CD4-positive, alpha-beta memory T cell (primary cell): ENCODE measurements at regions of chr9 and their contacts with region 1.

Region 1: DNA sequence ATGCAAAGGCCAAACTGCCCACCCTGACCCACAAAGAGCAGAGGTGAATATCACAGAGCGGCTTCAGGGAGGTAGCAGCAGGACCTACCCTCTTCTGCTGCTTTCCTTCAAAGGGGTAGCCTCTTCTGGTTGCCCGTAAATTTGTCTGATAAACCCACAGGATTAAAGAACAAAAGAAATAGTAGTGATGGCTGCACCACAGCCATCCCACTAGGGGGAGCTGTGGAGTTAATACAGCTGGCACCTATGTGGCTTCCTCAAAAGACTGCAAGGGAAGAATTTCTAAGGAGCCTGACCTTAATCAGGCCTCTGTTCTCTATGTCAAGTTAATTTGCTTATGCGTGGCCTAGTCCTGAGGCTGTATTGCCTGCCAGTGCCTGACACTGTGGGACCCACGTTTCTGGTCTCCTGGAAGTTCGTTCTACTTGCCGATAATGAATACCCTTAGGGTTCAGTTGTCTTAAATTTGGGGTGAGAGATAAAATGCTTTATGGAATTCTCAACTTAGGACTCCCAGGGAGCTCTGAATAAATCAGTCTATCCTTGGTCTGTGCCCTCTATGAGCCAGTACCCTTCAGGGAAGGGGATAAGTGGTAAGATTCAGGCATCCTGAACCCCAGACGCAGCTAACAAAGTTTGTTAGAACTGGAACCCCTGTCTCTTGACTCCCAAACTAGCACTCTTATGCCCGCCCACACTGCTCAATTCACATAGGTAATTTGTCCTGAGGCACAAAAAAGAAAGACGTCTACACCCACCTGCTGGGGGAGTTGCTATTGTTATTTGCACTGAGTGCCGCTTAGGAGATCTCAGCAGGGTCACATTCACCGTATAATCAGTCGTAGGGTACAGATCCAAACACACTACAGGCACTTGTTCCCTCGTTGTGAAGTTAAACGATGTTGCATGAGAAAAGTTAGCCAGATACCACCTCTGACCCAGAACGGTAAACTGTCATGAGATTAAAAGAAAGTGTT is 77.1 kb downstream of the SUSD1 start:
- DNase-seq: peak; percentile 64 to 73 (median 71)
- H3K4me3 ChIP-seq: no peak overlapping the region
- H3K4me3 Mint-ChIP-seq: no peak overlapping the region
- H3K27ac ChIP-seq: no peak overlapping the region
- H3K27ac Mint-ChIP-seq: no peak overlapping the region
- H3K4me1 ChIP-seq: peaks cover 21% of the 10 kb centered on the region
- H3K4me1 Mint-ChIP-seq: peaks cover 17 to 33% (median 23%) of the 10 kb centered on the region in 4 donors
- H3K27me3 ChIP-seq: no peaks in the 10 kb centered on the region
- H3K27me3 Mint-ChIP-seq: no peaks in the 10 kb centered on the region

Region 2: GRCh38 chr9:111759762-111760639 is 338.0 kb before region 1 on chr9:
- CTCF ChIA-PET with region 1: interaction called, 11 read pairs
- POLR2A ChIA-PET with region 1: no interaction called
- intact Hi-C with region 1: no loop called
- DNase-seq: peak; percentile 56 to 70 (median 68)
- H3K4me3 ChIP-seq: no peak overlapping the region
- H3K4me3 Mint-ChIP-seq: no peak overlapping the region
- H3K27ac ChIP-seq: no peak overlapping the region
- H3K27ac Mint-ChIP-seq: no peak overlapping the region
- H3K4me1 ChIP-seq: no peaks in the 10 kb centered on the region
- H3K4me1 Mint-ChIP-seq: peaks cover 0 to 4% (median 2%) of the 10 kb centered on the region in 4 donors
- H3K27me3 ChIP-seq: no peaks in the 10 kb centered on the region
- H3K27me3 Mint-ChIP-seq: no peaks in the 10 kb centered on the region

Region 3: GRCh38 chr9:111870774-111871498 is 227.1 kb before region 1 on chr9:
- CTCF ChIA-PET with region 1: no interaction called
- POLR2A ChIA-PET with region 1: no interaction called
- intact Hi-C with region 1: no loop called
- DNase-seq: no peak
- H3K4me3 ChIP-seq: no peak overlapping the region
- H3K4me3 Mint-ChIP-seq: no peak overlapping the region
- H3K27ac ChIP-seq: no peak overlapping the region
- H3K27ac Mint-ChIP-seq: peak overlapping the region in 2 of 7 donors; percentile 7 to 9
- H3K4me1 ChIP-seq: no peaks in the 10 kb centered on the region
- H3K4me1 Mint-ChIP-seq: peaks cover 5 to 19% (median 10%) of the 10 kb centered on the region in 4 donors
- H3K27me3 ChIP-seq: no peaks in the 10 kb centered on the region
- H3K27me3 Mint-ChIP-seq: no peaks in the 10 kb centered on the region

Region 4: DNA sequence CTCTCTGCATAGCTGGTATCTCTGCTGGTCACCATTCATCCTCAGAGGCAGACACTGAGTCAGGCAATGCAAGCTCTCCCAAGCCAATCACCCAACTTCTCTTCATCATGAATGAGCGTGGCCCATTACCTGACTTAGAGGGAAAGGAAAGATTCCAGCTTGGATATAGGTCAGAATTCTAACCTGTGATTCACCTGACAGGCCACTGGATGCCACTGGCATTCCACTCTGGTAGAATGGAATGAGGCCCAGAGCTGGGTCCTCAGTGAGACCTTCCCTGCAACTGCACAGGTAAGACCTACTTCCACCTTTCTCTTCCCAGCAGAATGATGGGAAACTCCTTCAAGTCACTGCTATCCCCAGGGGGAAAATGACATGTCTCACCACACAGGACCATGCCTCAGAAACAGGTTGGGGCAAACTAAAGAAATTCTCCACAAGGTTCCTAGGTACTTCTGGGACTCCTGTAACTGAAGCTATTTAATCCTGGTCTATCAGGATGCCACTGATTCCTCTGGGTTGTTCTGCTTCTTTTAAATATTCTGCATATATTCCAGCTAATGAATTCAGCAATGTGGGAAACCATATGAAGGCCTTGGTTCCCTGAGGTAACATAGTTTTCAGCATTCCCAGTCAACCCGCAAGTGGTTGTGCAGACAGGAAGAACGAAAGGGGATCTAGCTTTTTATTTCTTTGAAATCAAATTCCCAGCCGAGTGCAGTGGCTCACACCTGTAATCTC is 15.1 kb after region 1 on chr9:
- CTCF ChIA-PET with region 1: interaction called, 18 read pairs
- POLR2A ChIA-PET with region 1: no interaction called
- intact Hi-C with region 1: no loop called
- DNase-seq: peak in 4 of 5 donors; percentile 18 to 28 (median 25)
- H3K4me3 ChIP-seq: no peak overlapping the region
- H3K4me3 Mint-ChIP-seq: no peak overlapping the region
- H3K27ac ChIP-seq: no peak overlapping the region
- H3K27ac Mint-ChIP-seq: peak overlapping the region in 1 of 7 donors; percentile 15
- H3K4me1 ChIP-seq: no peaks in the 10 kb centered on the region
- H3K4me1 Mint-ChIP-seq: no peaks in the 10 kb centered on the region
- H3K27me3 ChIP-seq: no peaks in the 10 kb centered on the region
- H3K27me3 Mint-ChIP-seq: no peaks in the 10 kb centered on the region

Region 5: GRCh38 chr9:112174218-112174964 is 76.4 kb after region 1 on chr9:
- CTCF ChIA-PET with region 1: interaction called, 11 read pairs
- POLR2A ChIA-PET with region 1: interaction called, 5 read pairs
- intact Hi-C with region 1: loop called (anchors 5 kb)
- DNase-seq: peak; percentile 75 to 83 (median 80)
- H3K4me3 ChIP-seq: peak overlapping the region; percentile 54 to 68
- H3K4me3 Mint-ChIP-seq: peak overlapping the region; percentile 88 to 96 (median 91)
- H3K27ac ChIP-seq: peak overlapping the region; percentile 19
- H3K27ac Mint-ChIP-seq: peak overlapping the region; percentile 82 to 97 (median 95)
- H3K4me1 ChIP-seq: peaks cover 64% of the 10 kb centered on the region
- H3K4me1 Mint-ChIP-seq: peaks cover 49 to 88% (median 69%) of the 10 kb centered on the region in 4 donors
- H3K27me3 ChIP-seq: no peaks in the 10 kb centered on the region
- H3K27me3 Mint-ChIP-seq: no peaks in the 10 kb centered on the region

Region 6: DNA sequence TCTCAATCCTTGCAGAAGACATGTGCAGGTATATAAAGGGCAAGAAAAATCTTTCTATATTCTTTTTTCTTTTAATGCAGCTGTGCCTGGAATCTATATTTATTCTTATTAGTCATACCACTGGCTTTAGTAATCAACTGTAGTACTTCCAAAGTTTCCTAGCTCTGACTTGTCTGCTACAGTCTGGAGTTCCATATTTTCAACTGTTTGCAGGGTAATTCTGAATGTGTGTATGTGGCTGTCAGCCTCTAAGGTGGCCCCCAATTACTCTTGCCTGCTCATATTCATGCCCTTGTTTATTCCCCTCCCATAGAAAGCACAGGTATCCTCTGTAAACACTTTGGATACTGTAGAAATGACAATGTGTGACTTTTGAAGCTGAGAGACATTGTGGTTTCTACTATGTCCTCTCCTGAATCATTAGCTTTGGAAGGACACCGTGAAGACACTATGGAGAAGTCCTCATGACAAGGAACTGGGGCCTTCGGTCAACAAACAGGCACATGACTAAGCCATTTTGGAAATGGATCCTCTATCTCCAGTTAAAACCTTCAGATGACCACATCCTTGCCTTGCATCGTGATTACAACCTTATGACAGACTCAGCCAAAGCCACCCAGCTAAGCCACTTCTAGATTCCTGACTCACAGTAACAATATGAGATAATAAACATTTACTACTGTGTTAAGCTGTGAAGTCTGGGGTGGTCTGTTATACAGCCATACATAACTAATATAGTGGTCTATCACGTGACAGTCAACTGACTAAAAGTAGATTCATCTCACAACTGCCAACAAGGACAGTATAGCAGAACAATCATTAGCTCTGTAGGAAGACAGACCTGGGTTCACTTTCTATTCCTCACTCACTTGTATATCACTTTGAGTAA is 126.6 kb after region 1 on chr9:
- CTCF ChIA-PET with region 1: interaction called, 3 read pairs
- POLR2A ChIA-PET with region 1: interaction called, 3 read pairs
- intact Hi-C with region 1: loop called (anchors 5 kb)
- DNase-seq: no peak
- H3K4me3 ChIP-seq: no peak overlapping the region
- H3K4me3 Mint-ChIP-seq: no peak overlapping the region
- H3K27ac ChIP-seq: no peak overlapping the region
- H3K27ac Mint-ChIP-seq: peak overlapping the region in 6 of 7 donors; percentile 13 to 88 (median 34)
- H3K4me1 ChIP-seq: no peaks in the 10 kb centered on the region
- H3K4me1 Mint-ChIP-seq: peaks cover 8 to 15% (median 12%) of the 10 kb centered on the region in 4 donors
- H3K27me3 ChIP-seq: no peaks in the 10 kb centered on the region
- H3K27me3 Mint-ChIP-seq: no peaks in the 10 kb centered on the region

Region 7: GRCh38 chr9:112348257-112349007 is 250.4 kb after region 1 on chr9:
- CTCF ChIA-PET with region 1: interaction called, 4 read pairs
- POLR2A ChIA-PET with region 1: no interaction called
- intact Hi-C with region 1: loop called (anchors 5 kb)
- DNase-seq: peak; percentile 61 to 72 (median 65)
- H3K4me3 ChIP-seq: peak overlapping the region in 1 of 2 donors; percentile 51
- H3K4me3 Mint-ChIP-seq: peak overlapping the region; percentile 52 to 85 (median 78)
- H3K27ac ChIP-seq: no peak overlapping the region
- H3K27ac Mint-ChIP-seq: peak overlapping the region in 4 of 7 donors; percentile 67 to 83 (median 79)
- H3K4me1 ChIP-seq: peaks cover 11% of the 10 kb centered on the region
- H3K4me1 Mint-ChIP-seq: peaks cover 5 to 14% (median 9%) of the 10 kb centered on the region in 4 donors
- H3K27me3 ChIP-seq: no peaks in the 10 kb centered on the region
- H3K27me3 Mint-ChIP-seq: peaks cover 2 to 3% of the 10 kb centered on the region in 2 donors

Region 8: GRCh38 chr9:112361601-112362000 is 263.6 kb after region 1 on chr9:
- CTCF ChIA-PET with region 1: interaction called, 162 read pairs
- POLR2A ChIA-PET with region 1: interaction called, 3 read pairs
- intact Hi-C with region 1: loop called (anchors 1 kb)
- DNase-seq: peak in 4 of 5 donors; percentile 42 to 48 (median 46)
- H3K4me3 ChIP-seq: no peak overlapping the region
- H3K4me3 Mint-ChIP-seq: no peak overlapping the region
- H3K27ac ChIP-seq: no peak overlapping the region
- H3K27ac Mint-ChIP-seq: no peak overlapping the region
- H3K4me1 ChIP-seq: no peaks in the 10 kb centered on the region
- H3K4me1 Mint-ChIP-seq: peaks cover 0 to 2% (median 1%) of the 10 kb centered on the region in 4 donors
- H3K27me3 ChIP-seq: no peaks in the 10 kb centered on the region
- H3K27me3 Mint-ChIP-seq: peaks cover 2 to 5% of the 10 kb centered on the region in 2 donors